GM10248 (cell line): ENCODE measurements at regions of chr17 and their contacts with region 1.

Region 1: GRCh38 chr17:74864866-74865395 is 5.2 kb upstream of the GRIN2C start:
- DNase-seq: peak; percentile 85
- CTCF ChIP-seq: peak; percentile 93

Region 2: DNA sequence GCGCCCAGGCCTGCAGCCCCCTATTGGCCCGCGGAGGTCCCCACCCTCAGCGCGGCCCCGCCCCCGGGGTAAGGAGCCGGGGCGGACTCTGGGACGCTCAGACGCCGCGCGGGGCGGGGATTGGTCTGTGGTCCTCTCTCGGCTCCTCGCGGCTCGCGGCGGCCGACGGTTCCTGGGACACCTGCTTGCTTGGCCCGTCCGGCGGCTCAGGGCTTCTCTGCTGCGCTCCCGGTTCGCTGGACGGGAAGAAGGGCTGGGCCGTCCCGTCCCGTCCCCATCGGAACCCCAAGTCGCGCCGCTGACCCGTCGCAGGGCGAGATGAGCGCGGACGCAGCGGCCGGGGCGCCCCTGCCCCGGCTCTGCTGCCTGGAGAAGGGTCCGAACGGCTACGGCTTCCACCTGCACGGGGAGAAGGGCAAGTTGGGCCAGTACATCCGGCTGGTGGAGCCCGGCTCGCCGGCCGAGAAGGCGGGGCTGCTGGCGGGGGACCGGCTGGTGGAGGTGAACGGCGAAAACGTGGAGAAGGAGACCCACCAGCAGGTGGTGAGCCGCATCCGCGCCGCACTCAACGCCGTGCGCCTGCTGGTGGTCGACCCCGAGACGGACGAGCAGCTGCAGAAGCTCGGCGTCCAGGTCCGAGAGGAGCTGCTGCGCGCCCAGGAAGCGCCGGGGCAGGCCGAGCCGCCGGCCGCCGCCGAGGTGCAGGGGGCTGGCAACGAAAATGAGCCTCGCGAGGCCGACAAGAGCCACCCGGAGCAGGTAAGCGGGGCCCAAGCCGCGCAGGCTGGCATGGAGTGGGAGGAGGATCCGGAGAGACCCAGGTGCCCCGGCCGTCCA is 116.2 kb before region 1 on chr17 and contains the start of gene NHERF1:
- CTCF ChIA-PET with region 1: interaction called, 58 read pairs
- POLR2A ChIA-PET with region 1: no interaction called
- DNase-seq: peak; percentile 99
- CTCF ChIP-seq: peak; percentile 19

Region 3: GRCh38 chr17:74807925-74808324 is 57.0 kb before region 1 on chr17:
- CTCF ChIA-PET with region 1: interaction called, 10 read pairs
- POLR2A ChIA-PET with region 1: no interaction called
- DNase-seq: no peak
- CTCF ChIP-seq: no peak

Region 4: DNA sequence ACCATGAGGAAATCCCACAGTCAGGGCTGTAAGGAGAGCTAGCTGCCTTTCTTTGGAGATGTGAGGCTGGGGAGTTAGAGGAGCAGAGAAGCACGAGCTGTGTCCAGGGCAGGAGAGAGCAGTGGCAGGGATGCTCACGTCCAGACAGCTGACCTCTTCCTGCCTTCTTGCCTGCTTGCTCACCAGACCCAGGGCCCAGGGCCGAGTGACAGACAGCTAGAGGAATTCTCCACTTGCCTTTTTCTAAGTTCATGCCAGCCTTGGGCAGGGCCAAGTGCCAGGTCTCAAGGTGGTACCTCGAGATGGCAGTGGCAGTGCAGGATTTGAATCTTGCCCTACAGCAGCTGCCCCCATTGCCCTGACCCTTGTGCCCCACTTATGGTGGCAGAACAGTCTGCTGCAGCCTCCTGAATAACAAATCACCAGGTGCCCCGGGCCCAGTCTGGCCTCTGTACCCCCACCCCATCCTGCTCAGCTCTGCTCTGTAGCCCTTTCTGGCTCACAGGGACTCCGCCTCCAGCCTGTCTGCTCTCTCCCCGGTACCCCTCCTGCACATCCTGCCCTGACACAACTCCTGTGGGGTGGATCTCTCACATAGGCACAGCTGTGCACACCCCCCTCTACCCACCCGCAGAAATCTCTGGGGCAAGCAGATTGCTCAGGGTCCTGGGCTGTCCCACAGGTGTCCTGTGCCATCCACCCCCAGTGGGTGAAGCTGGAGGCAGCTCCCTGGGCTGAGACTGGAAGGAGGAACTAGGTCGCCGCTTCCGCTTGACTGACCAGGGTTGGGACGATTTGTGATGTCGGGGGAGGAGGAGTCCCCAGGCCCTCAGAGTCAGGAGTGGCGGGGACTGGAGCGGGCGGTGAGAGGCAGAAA is 31.2 kb before region 1 on chr17:
- CTCF ChIA-PET with region 1: interaction called, 16 read pairs
- POLR2A ChIA-PET with region 1: no interaction called
- DNase-seq: peak; percentile 76
- CTCF ChIP-seq: no peak

Region 5: GRCh38 chr17:74842599-74843351 is 22.2 kb before region 1 on chr17:
- CTCF ChIA-PET with region 1: interaction called, 58 read pairs
- POLR2A ChIA-PET with region 1: no interaction called
- DNase-seq: peak; percentile 74
- CTCF ChIP-seq: peak; percentile 41

Region 6: DNA sequence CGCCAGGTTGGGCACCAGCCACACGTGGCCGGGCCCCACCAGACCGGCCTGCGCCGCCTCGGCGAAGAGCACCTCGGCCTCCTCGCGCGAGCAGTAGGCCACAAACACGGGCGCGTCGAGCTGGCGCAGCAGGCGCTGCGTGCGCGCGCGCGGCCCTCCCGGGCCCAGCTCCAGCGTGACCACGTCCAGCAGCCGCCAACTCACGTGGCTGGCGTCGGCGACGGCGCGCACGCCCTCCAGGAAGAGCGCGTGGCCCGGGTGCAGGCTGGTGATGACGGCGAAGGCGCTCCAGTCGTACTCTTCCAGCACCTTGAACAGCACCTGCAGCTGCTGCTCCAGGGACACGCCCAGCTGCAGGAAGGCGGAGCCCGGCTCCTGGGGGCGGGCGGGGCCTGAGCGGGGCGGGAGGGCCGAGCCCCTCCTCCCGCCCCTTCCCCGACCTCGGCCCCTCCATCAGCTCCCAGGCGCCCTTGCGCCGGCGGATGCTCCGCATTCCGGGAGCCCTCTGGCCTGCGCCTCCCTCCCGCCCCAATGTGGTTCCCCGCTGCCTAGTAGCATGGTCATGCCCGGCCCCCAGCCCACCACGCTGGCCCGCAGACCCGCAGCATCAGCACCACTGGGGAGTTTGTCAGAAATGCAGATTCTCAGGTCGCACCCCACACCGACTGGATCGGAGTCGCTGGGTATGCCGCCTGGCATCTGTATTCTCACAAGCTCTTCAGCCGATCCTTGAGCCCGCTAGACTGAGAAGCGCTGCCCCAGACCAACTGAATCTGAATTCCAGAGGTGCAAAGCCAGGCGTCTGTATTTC is 12.5 kb before region 1 on chr17:
- CTCF ChIA-PET with region 1: interaction called, 58 read pairs
- POLR2A ChIA-PET with region 1: no interaction called
- DNase-seq: peak; percentile 85
- CTCF ChIP-seq: no peak

Region 7: GRCh38 chr17:74888469-74888868 is 23.5 kb after region 1 on chr17:
- CTCF ChIA-PET with region 1: no interaction called
- POLR2A ChIA-PET with region 1: no interaction called
- DNase-seq: no peak
- CTCF ChIP-seq: no peak

Region 8: DNA sequence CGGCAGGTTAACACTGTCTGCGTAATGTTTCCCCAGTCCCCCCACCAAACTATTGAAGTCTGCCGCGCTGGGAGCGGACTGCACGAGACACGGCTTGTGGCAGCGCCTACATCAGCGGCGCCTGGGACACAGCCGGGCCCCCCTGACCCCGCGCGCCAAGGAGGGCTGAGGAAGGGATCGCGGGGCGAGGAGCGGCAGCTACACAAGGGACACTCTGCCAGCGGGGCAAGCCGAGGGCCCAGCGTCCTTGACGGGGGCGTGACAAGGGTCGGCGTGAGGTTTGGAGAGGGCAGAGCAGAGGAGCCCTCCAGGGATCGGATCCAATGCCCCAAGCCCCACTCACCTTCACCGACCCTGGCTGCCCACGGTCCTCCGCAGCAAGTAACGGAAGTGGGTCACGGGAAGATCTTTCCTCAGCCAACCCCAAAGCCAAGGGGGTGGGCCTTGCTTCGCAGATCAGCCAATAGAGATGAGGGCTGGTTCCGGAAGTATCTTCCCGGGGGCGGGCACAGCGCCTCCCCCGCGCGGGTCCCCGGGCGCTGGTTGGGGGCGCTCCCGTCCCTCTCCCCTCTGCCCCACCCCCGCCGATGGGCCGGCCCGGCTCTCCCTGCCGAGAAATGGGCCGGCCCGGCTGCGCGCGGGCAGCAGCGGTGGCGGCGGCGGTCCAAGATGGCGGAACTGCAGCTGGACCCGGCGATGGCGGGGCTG is 181.8 kb after region 1 on chr17 and contains the starts of genes ATP5PD and KCTD2:
- CTCF ChIA-PET with region 1: no interaction called
- POLR2A ChIA-PET with region 1: no interaction called
- DNase-seq: peak; percentile 99
- CTCF ChIP-seq: no peak

Region 9: GRCh38 chr17:75059369-75060345 is 194.7 kb after region 1 on chr17:
- CTCF ChIA-PET with region 1: no interaction called
- POLR2A ChIA-PET with region 1: no interaction called
- DNase-seq: no peak
- CTCF ChIP-seq: peak; percentile 41